ENCODE measurements at regions of chr7 and their contacts with region 1.

Region 1: GRCh38 chr7:128883622-128884501 is 21.2 kb downstream of the ATP6V1F start:
- DNase-seq: peak; percentile 96
- H3K4me3 ChIP-seq: no peak overlapping the region
- H3K27ac ChIP-seq: no peak overlapping the region
- H3K4me1 ChIP-seq: peaks cover 0 to 7% of the 10 kb centered on the region in 2 experiments; a peak in 1 of 4 replicates
- H3K27me3 ChIP-seq: no peaks in the 10 kb centered on the region
- CTCF ChIP-seq: peak; percentile 99
- EP300 ChIP-seq: no peak
- RAD21 ChIP-seq: peak; percentile 81

Region 2: GRCh38 chr7:128425850-128426249 is 458.0 kb before region 1 on chr7:
- CTCF ChIA-PET with region 1: interaction called, 59 read pairs
- POLR2A ChIA-PET with region 1: no interaction called
- DNase-seq: peak; percentile 83
- H3K4me3 ChIP-seq: no peak overlapping the region; a peak in 1 of 4 replicates
- H3K27ac ChIP-seq: no peak overlapping the region
- H3K4me1 ChIP-seq: peaks cover 0 to 3% of the 10 kb centered on the region in 2 experiments; a peak in 1 of 4 replicates
- H3K27me3 ChIP-seq: no peaks in the 10 kb centered on the region
- CTCF ChIP-seq: peak; percentile 100
- EP300 ChIP-seq: no peak
- RAD21 ChIP-seq: peak; percentile 95

Region 3: DNA sequence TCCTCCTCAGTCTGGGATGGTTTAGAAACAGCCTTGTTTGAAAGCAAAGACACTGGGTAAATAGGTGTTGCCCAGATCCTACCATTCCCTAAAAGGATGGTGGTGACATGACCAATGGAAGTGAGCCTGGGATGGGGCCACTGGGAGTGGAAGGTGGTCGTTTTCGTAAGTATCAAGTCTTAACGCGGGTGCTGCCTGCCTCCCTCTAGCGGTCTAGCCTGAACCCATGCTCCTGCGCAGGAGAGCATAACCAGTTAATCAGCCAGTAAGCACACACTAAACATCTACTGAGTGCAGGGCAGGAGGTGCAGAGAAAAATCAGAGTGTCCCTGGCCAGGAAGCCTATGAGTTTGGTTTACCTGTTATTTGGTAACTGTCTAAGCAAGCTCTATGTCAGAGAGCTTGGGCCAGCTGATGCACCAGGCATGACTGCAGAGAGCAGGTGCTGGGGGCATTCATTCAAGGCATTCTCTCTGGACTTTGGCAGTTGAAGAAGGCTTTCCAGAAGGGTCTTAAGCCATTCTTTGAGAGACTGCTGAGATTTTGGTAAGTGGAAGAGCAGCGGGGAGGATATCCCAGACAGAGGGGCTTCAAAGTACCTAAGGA is 210.8 kb before region 1 on chr7:
- CTCF ChIA-PET with region 1: interaction called, 15 read pairs
- POLR2A ChIA-PET with region 1: no interaction called
- DNase-seq: peak; percentile 60
- H3K4me3 ChIP-seq: no peak overlapping the region
- H3K27ac ChIP-seq: no peak overlapping the region
- H3K4me1 ChIP-seq: no peaks in the 10 kb centered on the region; a peak in 2 of 4 replicates
- H3K27me3 ChIP-seq: no peaks in the 10 kb centered on the region
- CTCF ChIP-seq: peak; percentile 40
- EP300 ChIP-seq: no peak
- RAD21 ChIP-seq: peak; percentile 40

Region 4: GRCh38 chr7:128739048-128739962 is 144.6 kb before region 1 on chr7 and contains the start of gene CALU:
- CTCF ChIA-PET with region 1: interaction called, 14 read pairs
- POLR2A ChIA-PET with region 1: no interaction called
- DNase-seq: peak; percentile 100
- H3K4me3 ChIP-seq: peak within 1 kb of the TSS; percentile 81 to 85
- H3K27ac ChIP-seq: peak within 1 kb of the TSS; percentile 94 to 96
- H3K4me1 ChIP-seq: peaks cover 18 to 26% of the 10 kb centered on the region in 2 experiments; a peak in 3 of 4 replicates
- H3K27me3 ChIP-seq: no peaks in the 10 kb centered on the region
- CTCF ChIP-seq: no peak
- EP300 ChIP-seq: peak in 1 of 2 experiments; percentile 41; a peak in 2 of 4 replicates
- RAD21 ChIP-seq: no peak
- polyA plus RNA-seq, gene CALU: 195 and 294 TPM in 2 replicates

Region 5: GRCh38 chr7:128835790-128836641 is 47.8 kb before region 1 on chr7:
- CTCF ChIA-PET with region 1: interaction called, 11 read pairs
- POLR2A ChIA-PET with region 1: no interaction called
- DNase-seq: no peak
- H3K4me3 ChIP-seq: no peak overlapping the region
- H3K27ac ChIP-seq: peak overlapping the region in 1 of 2 experiments; percentile 47; a peak in 1 of 4 replicates
- H3K4me1 ChIP-seq: peaks cover 19 to 25% of the 10 kb centered on the region in 2 experiments; a peak in 3 of 4 replicates
- H3K27me3 ChIP-seq: no peaks in the 10 kb centered on the region
- CTCF ChIP-seq: no peak
- EP300 ChIP-seq: no peak
- RAD21 ChIP-seq: no peak

Region 6: DNA sequence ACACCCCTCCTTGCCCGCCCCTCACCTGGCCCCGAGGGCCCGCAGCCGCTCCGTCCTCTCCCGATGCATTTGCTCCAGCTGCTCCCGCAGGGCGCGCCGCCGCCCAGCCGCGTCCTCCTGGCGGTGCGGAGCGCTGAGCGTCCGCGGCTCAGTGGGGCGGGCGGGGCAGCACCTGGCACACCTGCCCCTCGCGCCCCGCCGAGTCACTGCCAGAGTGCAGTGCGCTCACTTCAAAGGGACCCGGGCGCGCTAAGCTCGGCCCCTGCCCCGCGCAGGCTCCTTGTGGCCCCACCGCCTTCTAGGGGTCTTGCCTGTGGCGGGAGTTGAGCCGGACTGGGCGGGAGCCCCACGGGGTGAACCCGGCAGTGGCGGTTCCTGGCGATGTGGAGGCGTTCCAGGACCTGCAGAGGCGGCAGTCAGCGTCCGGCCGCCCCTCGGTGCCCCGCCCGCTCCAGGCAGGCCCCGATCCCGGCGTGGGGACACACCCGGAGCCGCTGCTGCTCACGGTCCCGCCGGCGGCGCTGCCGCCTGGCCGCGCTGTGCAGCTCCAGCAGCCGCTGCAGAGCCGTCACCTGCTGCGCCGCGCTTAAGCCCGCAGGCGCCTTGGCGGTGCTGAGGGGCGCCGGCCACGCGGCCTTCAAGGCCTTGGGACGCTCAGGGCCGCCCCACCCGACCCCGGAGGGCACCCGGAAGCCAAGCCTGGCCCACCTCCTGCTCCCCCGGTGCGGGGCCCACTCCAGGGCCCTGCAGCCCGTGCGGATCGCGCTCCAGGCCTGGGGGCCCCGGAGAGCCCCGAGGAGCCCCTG is 14.5 kb before region 1 on chr7:
- CTCF ChIA-PET with region 1: interaction called, 181 read pairs
- POLR2A ChIA-PET with region 1: no interaction called
- DNase-seq: peak; percentile 87
- H3K4me3 ChIP-seq: peak overlapping the region; percentile 50 to 56
- H3K27ac ChIP-seq: no peak overlapping the region
- H3K4me1 ChIP-seq: peaks cover 0 to 18% of the 10 kb centered on the region in 2 experiments; a peak in 1 of 4 replicates
- H3K27me3 ChIP-seq: no peaks in the 10 kb centered on the region
- CTCF ChIP-seq: peak; percentile 44
- EP300 ChIP-seq: no peak
- RAD21 ChIP-seq: no peak; the same call in 1 of the 2 replicates

Region 7: GRCh38 chr7:128909625-128910257 is 25.9 kb after region 1 on chr7:
- CTCF ChIA-PET with region 1: interaction called, 104 read pairs
- POLR2A ChIA-PET with region 1: no interaction called
- DNase-seq: peak; percentile 70
- H3K4me3 ChIP-seq: no peak overlapping the region
- H3K27ac ChIP-seq: no peak overlapping the region
- H3K4me1 ChIP-seq: peaks cover 0 to 4% of the 10 kb centered on the region in 2 experiments; a peak in 1 of 4 replicates
- H3K27me3 ChIP-seq: peaks cover 12% of the 10 kb centered on the region; the same call in 1 of the 2 replicates
- CTCF ChIP-seq: no peak
- EP300 ChIP-seq: no peak
- RAD21 ChIP-seq: no peak

Measured in SK-N-SH (cell line).